PC-3 (cell line): ENCODE measurements at regions of chr2 and their contacts with region 1.

Region 1: DNA sequence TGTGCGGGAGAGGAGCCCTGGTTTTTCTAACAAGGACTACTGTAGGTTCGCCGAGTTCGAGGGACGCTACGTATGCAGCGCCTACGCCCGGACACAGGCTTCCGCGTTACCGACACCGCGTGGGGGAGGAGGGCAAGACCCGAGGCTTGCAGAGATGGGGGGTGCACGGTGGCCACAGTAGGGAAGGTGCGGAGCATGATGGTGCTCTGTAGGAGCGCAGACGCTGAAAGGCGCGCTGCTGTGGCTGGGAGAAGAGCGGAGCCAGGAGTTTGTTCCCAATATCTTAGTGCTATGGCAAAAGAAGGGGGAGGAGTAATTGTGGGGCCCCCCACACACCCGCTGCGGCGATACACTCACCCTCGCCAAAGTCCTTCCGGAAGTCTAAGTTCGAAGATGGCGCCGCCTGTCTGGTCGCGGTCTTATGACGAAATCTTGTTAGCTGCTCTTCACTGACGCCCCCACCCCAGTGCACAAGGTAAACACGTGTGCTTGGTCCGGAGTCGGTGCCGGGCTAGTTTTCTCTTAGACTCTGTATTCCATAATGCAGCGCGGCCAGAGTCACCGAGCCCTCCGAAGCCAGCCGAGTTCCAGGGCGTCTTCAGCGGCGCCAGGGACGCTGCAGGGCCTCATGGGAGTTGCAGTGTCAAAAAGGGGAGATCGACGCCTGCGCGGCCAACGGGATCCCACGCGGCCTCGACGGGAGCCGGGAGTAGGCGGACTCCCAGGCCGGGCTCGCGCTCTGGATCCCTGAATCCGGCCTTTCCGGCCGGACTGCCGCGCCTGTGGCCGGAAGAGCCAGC is at the start of gene GTF3C2:
- DNase-seq: peak; percentile 94
- ATAC-seq: peak; percentile 88
- H3K4me3 ChIP-seq: peak within 1 kb of the TSS; percentile 77
- H3K27ac ChIP-seq: peak within 1 kb of the TSS; percentile 94
- H3K4me1 ChIP-seq: peaks cover 28% of the 10 kb centered on the region
- H3K27me3 ChIP-seq: no peaks in the 10 kb centered on the region
- CTCF ChIP-seq: no peak
- total RNA-seq, gene GTF3C2: 82.2 and 98.1 TPM in 2 replicates

Region 2: GRCh38 chr2:27320958-27321543 is 35.5 kb before region 1 on chr2:
- CTCF ChIA-PET with region 1: no interaction called
- POLR2A ChIA-PET with region 1: no interaction called
- intact Hi-C with region 1: loop called (anchors 1 kb)
- DNase-seq: peak; percentile 99
- ATAC-seq: peak; percentile 86
- H3K4me3 ChIP-seq: peak overlapping the region; percentile 81
- H3K27ac ChIP-seq: peak overlapping the region; percentile 94
- H3K4me1 ChIP-seq: peaks cover 32% of the 10 kb centered on the region
- H3K27me3 ChIP-seq: no peaks in the 10 kb centered on the region
- CTCF ChIP-seq: peak; percentile 70

Region 3: GRCh38 chr2:27370026-27370815 is 13.6 kb after region 1 on chr2 and contains the starts of genes EIF2B4 and SNX17:
- CTCF ChIA-PET with region 1: interaction called, 3 read pairs
- POLR2A ChIA-PET with region 1: interaction called, 5 read pairs
- intact Hi-C with region 1: loop called (anchors 1 kb)
- DNase-seq: peak; percentile 99
- ATAC-seq: peak; percentile 92
- H3K4me3 ChIP-seq: peak within 1 kb of the TSS; percentile 76
- H3K27ac ChIP-seq: peak within 1 kb of the TSS; percentile 51
- H3K4me1 ChIP-seq: peaks cover 35% of the 10 kb centered on the region
- H3K27me3 ChIP-seq: no peaks in the 10 kb centered on the region
- CTCF ChIP-seq: peak; percentile 81
- total RNA-seq, gene EIF2B4: 35.8 and 43.9 TPM in 2 replicates
- total RNA-seq, gene SNX17: 99.6 and 110 TPM in 2 replicates

Region 4: GRCh38 chr2:27890146-27890923 is 533.8 kb after region 1 on chr2 and contains the starts of genes BABAM2 and RBKS:
- CTCF ChIA-PET with region 1: no interaction called
- POLR2A ChIA-PET with region 1: interaction called, 12 read pairs
- intact Hi-C with region 1: no loop called
- DNase-seq: peak; percentile 87
- ATAC-seq: peak; percentile 86
- H3K4me3 ChIP-seq: peak within 1 kb of the TSS; percentile 88
- H3K27ac ChIP-seq: peak within 1 kb of the TSS; percentile 79
- H3K4me1 ChIP-seq: peaks cover 27% of the 10 kb centered on the region
- H3K27me3 ChIP-seq: no peaks in the 10 kb centered on the region
- CTCF ChIP-seq: no peak
- total RNA-seq, gene BABAM2: 16.3 and 17.9 TPM in 2 replicates
- total RNA-seq, gene RBKS: 1.8 and 2.6 TPM in 2 replicates